HepG2 (cell line): ENCODE measurements at regions of chr1 and their contacts with region 1.

Region 1: DNA sequence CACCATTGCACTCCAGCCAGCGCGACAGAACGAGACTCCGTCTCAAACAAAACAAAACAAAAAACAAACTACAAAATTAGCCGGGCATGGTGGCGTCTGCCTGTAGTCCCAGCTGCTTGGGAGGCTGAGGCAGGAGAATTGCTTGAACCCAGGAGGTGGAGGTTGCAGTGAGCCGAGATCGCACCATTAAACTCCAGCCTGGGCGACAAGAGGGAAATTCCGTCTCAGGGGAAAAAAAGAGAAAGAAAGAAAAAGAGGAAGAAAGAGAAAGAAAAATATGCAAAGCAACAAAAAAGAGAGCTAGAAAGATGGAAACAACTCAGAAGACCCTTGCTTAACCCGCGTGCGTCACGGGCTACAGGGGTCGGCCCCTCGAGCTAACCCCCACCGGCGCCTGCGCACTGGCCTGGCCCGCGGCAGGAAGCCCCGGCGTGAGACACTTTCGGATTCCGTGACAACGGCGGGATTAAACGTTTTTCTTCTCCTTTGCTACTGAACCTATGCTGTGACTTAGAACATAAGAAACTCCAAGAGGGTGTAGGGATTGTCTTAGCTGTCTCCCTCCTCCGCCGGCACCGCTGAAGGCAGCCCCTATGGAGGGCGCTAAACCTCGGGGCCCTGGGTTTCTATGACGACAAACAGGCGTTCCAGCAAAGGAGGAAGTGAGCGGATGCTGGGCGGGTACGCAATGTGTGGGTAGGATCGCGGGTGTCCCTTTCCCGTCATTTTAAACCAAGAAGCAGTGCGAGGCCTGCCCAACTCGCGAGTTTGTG is at the start of gene AXDND1:
- DNase-seq: peak; percentile 68
- ATAC-seq: peak; percentile 93
- H3K4me3 ChIP-seq: peak within 1 kb of the TSS; percentile 63 to 86 (median 73)
- H3K27ac ChIP-seq: peak within 1 kb of the TSS; percentile 65
- H3K4me1 ChIP-seq: peaks cover 18% of the 10 kb centered on the region; the same call in 1 of the 2 replicates
- H3K27me3 ChIP-seq: no peaks in the 10 kb centered on the region
- CTCF ChIP-seq: peak; percentile 33; the same call in 1 of the 2 replicates
- EP300 ChIP-seq: no peak
- POLR2A ChIP-seq: peak; percentile 30 to 74; a peak in 2 of 4 replicates
- RAD21 ChIP-seq: no peak
- total RNA-seq, gene AXDND1: 0.14 and 0.40 TPM in 2 replicates

Region 2: DNA sequence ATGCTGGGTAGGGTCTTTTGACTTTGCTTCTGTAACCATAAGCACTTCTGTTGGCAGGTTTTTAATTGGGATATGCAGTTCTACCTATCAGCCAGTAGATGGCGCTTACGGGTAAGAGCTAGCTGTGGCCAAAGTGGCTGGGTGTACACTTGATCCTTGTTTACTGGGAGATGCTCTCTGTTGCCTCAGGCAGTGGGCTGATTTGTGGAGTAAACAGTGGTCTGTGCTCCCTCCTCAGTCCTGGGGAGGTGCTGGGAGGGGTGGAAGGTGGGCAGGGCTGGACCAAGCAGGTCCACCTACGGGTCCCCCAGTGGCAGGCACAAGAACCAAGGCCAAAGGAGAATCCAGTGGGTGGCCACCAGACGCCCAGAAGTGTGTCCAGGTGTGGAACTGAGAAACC is 597.1 kb before region 1 on chr1:
- CTCF ChIA-PET with region 1: no interaction called
- POLR2A ChIA-PET with region 1: no interaction called
- in situ Hi-C with region 1: loop called (anchors 25 kb)
- intact Hi-C with region 1: no loop called
- DNase-seq: peak; percentile 20
- ATAC-seq: peak; percentile 66
- H3K4me3 ChIP-seq: no peak overlapping the region
- H3K27ac ChIP-seq: no peak overlapping the region
- H3K4me1 ChIP-seq: no peaks in the 10 kb centered on the region; the same call in 1 of the 2 replicates
- H3K27me3 ChIP-seq: no peaks in the 10 kb centered on the region
- CTCF ChIP-seq: peak; percentile 82
- EP300 ChIP-seq: no peak
- POLR2A ChIP-seq: no peak
- RAD21 ChIP-seq: 0 out of 2 replicates have a peak, but pooled peaks have one; percentile 17